Sigmoid colon (tissue), 7 donors: ENCODE measurements at regions of chr20 and their contacts with region 1.

Region 1: GRCh38 chr20:32789896-32790750 is 27.9 kb downstream of the DNMT3B start:
- DNase-seq: peak; percentile 84
- H3K4me3 ChIP-seq: no peak overlapping the region
- H3K27ac ChIP-seq: no peak overlapping the region
- H3K4me1 ChIP-seq: no peaks in the 10 kb centered on the region
- H3K27me3 ChIP-seq: no peaks in the 10 kb centered on the region
- CTCF ChIP-seq: peak; percentile 93 to 99 (median 96)
- EP300 ChIP-seq: no peak
- POLR2A ChIP-seq: no peak

Region 2: DNA sequence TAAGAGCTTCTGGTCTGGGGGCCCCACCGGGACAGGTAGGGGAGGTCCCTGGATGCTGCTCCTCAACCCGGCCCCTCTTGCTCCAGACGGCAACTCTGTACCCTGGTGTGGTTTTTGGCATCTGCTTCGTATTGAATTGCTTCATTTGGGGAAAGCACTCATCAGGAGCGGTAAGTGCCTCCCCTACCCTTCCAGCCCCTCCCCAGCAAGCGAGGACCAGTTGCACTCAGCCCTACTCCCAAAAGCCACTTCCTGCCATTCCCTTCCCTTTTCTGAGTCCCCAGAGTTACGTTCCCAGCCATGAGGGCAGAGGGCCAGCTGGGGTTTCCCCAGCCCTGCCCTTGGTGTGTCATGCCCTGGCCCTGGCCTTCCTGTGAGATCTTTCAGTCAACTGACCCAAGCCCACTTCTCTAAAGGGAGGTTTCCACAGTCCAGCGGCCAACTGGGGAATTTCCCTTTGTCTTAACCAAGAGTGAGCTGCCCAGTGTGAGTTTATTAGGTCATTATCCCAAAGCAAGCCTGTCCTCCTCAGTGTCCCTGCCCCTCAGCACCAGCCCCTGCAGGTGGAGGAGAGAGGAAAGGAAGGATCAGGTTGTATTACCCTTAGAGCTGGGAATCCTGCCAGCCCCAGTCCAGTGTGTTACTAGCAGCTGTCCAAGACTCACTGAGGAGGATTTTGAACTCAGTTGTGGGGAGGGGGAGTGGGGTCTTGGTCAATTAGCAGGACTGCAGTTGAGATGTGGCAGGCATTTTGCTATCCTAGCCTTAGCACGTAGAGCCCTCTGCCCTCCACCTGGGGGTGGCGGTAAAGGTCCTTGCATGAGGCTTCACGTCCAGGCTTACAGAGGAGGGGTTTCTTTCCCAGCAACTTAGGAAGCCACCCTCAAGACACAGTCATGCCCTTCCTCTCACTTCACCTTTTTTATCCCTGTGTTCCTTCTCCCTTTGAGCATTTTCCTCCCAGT is 634.8 kb before region 1 on chr20:
- intact Hi-C with region 1: no loop called
- DNase-seq: peak; percentile 87
- H3K4me3 ChIP-seq: no peak overlapping the region
- H3K27ac ChIP-seq: peak overlapping the region in 1 of 4 donors; percentile 2
- H3K4me1 ChIP-seq: peaks cover 0 to 13% (median 8%) of the 10 kb centered on the region in 4 donors
- H3K27me3 ChIP-seq: no peaks in the 10 kb centered on the region
- CTCF ChIP-seq: no peak
- EP300 ChIP-seq: no peak
- POLR2A ChIP-seq: no peak

Region 3: GRCh38 chr20:33299111-33299603 is 509.0 kb after region 1 on chr20:
- intact Hi-C with region 1: loop called (anchors 2 kb)
- DNase-seq: peak; percentile 70
- H3K4me3 ChIP-seq: no peak overlapping the region
- H3K27ac ChIP-seq: no peak overlapping the region
- H3K4me1 ChIP-seq: peaks cover 0 to 5% (median 0%) of the 10 kb centered on the region in 4 donors
- H3K27me3 ChIP-seq: peaks cover 0 to 13% (median 0%) of the 10 kb centered on the region in 3 donors
- CTCF ChIP-seq: peak; percentile 59 to 91 (median 76)
- EP300 ChIP-seq: no peak
- POLR2A ChIP-seq: no peak